MCF 10A (cell line): ENCODE measurements at regions of chr14 and their contacts with region 1.

Region 1: DNA sequence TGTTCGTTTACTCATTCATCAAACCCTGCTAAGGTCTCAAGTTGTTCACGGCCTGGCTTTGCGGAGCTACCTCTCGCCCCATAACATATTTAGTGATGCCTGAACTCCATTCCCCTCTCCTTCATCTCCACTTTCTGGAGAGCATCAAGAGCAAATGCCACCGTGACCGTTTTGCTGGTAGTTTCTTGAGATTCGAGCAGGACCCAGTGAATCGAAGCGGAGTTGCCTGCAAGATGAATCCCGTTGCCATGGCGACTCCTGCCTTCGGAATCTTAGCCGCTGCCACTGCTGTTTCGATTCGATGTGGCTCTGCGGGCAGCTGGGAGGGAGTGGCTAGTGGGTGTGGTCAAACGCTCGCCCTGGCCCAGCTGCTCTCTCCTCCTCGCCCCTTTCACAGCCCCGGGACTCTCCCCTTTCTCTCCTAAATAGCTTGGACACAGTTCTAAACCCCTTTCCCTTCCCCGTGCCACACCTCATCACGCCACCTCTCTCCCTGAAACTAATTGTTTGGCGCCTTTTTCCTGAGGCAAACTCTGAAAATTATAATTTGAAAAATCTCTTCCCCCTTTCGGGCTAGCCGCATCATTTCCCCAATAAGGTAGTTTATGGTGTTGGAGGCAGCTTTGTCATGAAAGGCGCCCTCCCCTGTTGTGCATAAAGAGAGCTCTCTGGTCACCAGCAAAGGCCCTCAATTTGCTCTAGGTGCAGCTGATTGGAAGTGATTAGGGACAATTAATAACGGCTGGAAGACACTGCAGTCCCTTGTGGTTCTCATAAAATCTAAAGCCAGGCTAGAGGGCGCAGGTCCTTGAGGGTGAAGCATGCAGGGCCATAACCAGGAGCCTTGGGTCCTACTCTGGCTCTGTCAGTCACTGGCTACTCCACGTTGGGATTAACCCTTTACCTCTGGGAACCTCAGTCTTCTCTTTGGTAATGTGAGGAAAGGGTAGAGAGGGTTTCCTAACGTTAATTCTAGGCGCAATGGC is 1.6 kb downstream of the DAAM1 start:
- DNase-seq: peak; percentile 77
- H3K4me3 Mint-ChIP-seq: peak overlapping the region; percentile 89
- H3K27ac Mint-ChIP-seq: peak overlapping the region; percentile 76
- H3K4me1 Mint-ChIP-seq: peaks cover 9% of the 10 kb centered on the region
- H3K27me3 Mint-ChIP-seq: no peaks in the 10 kb centered on the region
- CTCF ChIP-seq: no peak

Region 2: DNA sequence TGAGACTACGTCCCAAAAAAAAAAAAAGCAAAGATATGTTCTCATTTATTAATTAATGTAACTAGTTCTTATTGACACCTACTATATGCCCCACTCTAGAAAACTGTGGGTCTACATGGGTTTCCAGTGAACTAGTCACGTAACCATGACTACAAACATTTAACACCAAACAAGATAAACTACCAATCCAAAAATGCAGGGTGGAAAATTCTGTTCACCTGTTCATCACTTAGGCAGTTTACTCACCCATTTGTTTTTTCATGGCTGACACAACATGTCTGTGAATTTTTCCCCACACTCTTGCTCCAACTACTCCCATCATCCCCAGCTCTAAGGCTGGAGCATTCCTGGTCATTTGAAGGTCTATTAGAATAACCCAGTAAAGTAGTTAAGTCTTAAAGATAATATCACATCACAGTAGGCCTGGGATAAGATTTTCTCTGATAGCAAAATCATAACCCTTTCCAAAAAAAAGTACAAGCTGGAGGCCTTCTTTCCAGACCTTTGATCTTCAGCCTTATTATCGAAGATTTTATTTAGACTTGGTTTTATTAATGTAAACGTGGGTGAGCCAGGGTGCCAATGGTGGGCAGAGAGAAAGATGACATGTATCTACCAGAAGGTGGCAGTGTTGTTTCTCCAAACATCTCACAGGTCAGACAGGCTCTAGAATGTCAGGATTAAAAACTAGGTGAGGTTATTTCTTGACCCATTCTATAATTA is 63.2 kb before region 1 on chr14:
- CTCF ChIA-PET with region 1: interaction called, 4 read pairs
- POLR2A ChIA-PET with region 1: interaction called, 9 read pairs
- intact Hi-C with region 1: loop called (anchors 1 kb)
- DNase-seq: peak; percentile 75
- H3K4me3 Mint-ChIP-seq: no peak overlapping the region
- H3K27ac Mint-ChIP-seq: no peak overlapping the region
- H3K4me1 Mint-ChIP-seq: no peaks in the 10 kb centered on the region
- H3K27me3 Mint-ChIP-seq: peaks cover 12% of the 10 kb centered on the region
- CTCF ChIP-seq: peak; percentile 61

Region 3: GRCh38 chr14:59281613-59282377 is 91.7 kb after region 1 on chr14:
- CTCF ChIA-PET with region 1: no interaction called
- POLR2A ChIA-PET with region 1: interaction called, 81 read pairs
- intact Hi-C with region 1: loop called (anchors 1 kb)
- DNase-seq: peak; percentile 80
- H3K4me3 Mint-ChIP-seq: peak overlapping the region; percentile 43
- H3K27ac Mint-ChIP-seq: peak overlapping the region; percentile 61
- H3K4me1 Mint-ChIP-seq: peaks cover 46% of the 10 kb centered on the region
- H3K27me3 Mint-ChIP-seq: no peaks in the 10 kb centered on the region
- CTCF ChIP-seq: no peak

Region 4: GRCh38 chr14:59343585-59343984 is 153.5 kb after region 1 on chr14:
- CTCF ChIA-PET with region 1: no interaction called
- POLR2A ChIA-PET with region 1: interaction called, 10 read pairs
- intact Hi-C with region 1: no loop called
- DNase-seq: peak; percentile 41
- H3K4me3 Mint-ChIP-seq: no peak overlapping the region
- H3K27ac Mint-ChIP-seq: no peak overlapping the region
- H3K4me1 Mint-ChIP-seq: peaks cover 24% of the 10 kb centered on the region
- H3K27me3 Mint-ChIP-seq: no peaks in the 10 kb centered on the region
- CTCF ChIP-seq: no peak

Region 5: DNA sequence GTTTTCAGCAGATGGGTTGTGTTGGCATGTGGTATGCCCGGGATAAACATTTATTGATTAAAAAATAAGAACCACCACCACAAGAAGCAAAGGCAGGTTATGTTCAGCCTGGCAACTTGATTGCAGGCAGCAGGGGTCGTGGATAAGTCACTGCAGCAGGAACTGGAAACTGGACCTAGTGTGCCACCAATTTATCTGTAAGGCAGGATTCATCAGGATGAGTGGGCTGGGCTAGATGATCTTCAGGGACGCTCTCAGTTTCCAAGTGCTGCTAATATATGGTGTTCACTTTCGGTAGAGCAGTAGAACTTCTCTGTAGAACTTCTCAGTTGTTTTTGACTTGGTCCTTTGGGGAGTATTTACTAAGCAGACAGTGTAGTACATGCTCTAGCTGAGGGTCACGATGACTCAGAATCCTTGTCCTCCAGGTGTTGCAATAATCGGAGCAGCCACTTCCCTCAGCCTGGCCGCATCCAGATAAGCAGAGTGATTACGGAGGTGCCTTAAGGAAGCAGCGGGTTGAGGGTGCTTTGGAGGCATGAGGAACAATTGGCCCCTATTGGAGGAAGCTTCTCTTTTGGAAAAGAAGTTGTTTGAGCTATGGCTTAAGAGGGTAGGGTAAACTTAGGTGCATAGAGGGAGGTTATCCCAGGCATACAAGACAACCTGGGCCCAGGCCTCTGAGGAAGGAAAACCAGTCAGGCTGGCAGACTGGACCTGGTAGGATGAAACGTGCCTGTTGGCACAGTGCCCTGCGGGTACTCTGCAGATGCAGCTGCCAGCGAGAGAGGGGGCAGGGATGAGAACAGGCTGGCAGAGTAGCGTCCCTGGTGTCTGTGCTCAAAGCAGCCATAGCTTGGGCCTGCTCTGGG is 171.1 kb after region 1 on chr14:
- CTCF ChIA-PET with region 1: no interaction called
- POLR2A ChIA-PET with region 1: interaction called, 26 read pairs
- intact Hi-C with region 1: loop called (anchors 2 kb)
- DNase-seq: peak; percentile 92
- H3K4me3 Mint-ChIP-seq: peak overlapping the region; percentile 50
- H3K27ac Mint-ChIP-seq: peak overlapping the region; percentile 84
- H3K4me1 Mint-ChIP-seq: peaks cover 79% of the 10 kb centered on the region
- H3K27me3 Mint-ChIP-seq: no peaks in the 10 kb centered on the region
- CTCF ChIP-seq: no peak

Region 6: DNA sequence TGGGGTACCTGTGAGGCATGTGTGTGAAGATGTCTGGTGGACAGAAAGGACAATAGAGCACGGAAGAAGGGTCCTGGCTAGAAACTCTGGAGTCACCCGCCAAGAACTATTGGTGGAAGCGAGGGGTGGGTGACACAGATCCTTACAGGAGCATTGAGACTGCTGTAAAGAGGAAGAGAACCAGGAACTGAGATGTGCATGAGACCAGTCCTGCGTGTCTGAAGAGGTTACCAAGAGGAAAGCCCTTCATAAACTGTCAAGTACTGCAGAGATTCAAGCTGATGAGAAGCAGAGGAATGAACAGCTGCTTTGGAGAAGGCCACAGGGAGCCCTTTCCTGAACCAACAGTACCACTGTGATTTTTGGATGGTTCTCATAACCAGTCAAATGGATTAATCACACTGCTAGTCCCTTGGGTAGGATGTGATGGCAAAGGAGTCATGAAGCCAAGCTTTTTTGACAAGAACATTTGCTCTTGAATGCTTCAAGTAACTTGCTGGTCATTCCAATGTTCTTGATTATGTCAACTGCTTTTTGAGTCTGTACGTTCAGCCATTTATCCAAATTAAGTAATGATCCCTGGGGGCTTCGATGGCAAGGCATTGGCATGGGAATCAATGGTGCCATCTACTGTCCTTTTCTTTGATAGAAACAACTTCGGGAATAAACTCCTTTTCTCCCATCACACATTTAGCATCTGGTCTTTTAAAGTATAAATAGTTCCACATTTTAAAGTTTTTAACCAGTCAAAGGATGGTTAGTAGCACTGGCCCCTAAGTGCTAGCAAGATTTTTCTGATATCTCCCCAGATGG is 232.2 kb after region 1 on chr14:
- CTCF ChIA-PET with region 1: no interaction called
- POLR2A ChIA-PET with region 1: interaction called, 3 read pairs
- intact Hi-C with region 1: loop called (anchors 5 kb)
- DNase-seq: no peak
- H3K4me3 Mint-ChIP-seq: no peak overlapping the region
- H3K27ac Mint-ChIP-seq: no peak overlapping the region
- H3K4me1 Mint-ChIP-seq: no peaks in the 10 kb centered on the region
- H3K27me3 Mint-ChIP-seq: no peaks in the 10 kb centered on the region
- CTCF ChIP-seq: peak; percentile 29

Region 7: DNA sequence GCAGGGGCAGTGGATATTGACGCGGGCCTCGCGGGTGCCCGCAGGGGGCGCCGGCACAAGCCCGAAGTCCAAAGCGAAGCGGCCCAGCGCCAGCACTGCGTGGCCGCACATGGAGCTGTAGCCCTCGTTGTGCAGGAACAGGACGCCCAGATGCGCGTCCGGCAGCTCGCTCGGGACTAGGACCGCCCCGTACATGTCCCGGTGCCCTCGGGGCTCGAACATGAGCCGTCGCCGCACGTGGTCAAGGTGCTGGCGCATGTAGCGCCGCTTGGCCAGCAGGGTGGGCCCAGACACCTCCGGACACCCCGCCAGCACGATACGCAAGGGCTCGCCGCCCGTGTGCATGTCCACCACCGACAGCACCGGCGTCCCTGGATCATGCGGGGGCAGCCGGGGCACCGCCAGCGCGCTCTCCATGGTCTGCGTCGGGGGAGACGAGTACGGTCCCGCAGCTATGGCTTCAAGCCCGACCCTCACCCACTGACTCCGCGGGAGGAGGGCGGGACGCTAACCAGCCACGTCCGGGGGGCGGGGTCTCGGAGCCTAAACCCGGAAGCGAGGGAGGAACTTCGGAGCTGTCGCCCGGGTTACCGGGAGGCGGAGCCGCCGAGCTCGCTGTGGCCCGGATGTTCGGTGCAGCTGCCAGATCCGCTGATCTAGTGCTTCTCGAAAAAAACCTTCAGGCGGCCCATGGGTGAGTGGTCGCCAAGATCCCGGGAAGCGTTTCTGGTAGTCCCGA is 294.0 kb after region 1 on chr14 and contains the starts of genes JKAMP and L3HYPDH:
- CTCF ChIA-PET with region 1: no interaction called
- POLR2A ChIA-PET with region 1: interaction called, 13 read pairs
- intact Hi-C with region 1: no loop called
- DNase-seq: peak; percentile 96
- H3K4me3 Mint-ChIP-seq: peak within 1 kb of the TSS; percentile 89
- H3K27ac Mint-ChIP-seq: peak within 1 kb of the TSS; percentile 86
- H3K4me1 Mint-ChIP-seq: peaks cover 37% of the 10 kb centered on the region
- H3K27me3 Mint-ChIP-seq: no peaks in the 10 kb centered on the region
- CTCF ChIP-seq: peak; percentile 54
- total RNA-seq, gene JKAMP: 29.7 and 35.8 TPM in 2 replicates
- total RNA-seq, gene L3HYPDH: 32.5 and 35.0 TPM in 2 replicates